GM12878 (cell line): ENCODE measurements at regions of chr3 and their contacts with region 1.

Region 1: GRCh38 chr3:149752051-149752787 is at the start of gene COMMD2:
- DNase-seq: peak; percentile 84
- ATAC-seq: peak; percentile 100
- H3K4me3 ChIP-seq: peak within 1 kb of the TSS; percentile 85
- H3K27ac ChIP-seq: peak within 1 kb of the TSS; percentile 54
- H3K4me1 ChIP-seq: no peaks in the 10 kb centered on the region
- H3K27me3 ChIP-seq: no peaks in the 10 kb centered on the region
- CTCF ChIP-seq: peak; percentile 21 to 47 (median 46); a peak in 5 of 6 replicates
- EP300 ChIP-seq: no peak
- POLR2A ChIP-seq: peak; percentile 95
- RAD21 ChIP-seq: peak; percentile 40
- polyA plus RNA-seq, gene COMMD2: 59.4 to 97.0 TPM

Region 2: DNA sequence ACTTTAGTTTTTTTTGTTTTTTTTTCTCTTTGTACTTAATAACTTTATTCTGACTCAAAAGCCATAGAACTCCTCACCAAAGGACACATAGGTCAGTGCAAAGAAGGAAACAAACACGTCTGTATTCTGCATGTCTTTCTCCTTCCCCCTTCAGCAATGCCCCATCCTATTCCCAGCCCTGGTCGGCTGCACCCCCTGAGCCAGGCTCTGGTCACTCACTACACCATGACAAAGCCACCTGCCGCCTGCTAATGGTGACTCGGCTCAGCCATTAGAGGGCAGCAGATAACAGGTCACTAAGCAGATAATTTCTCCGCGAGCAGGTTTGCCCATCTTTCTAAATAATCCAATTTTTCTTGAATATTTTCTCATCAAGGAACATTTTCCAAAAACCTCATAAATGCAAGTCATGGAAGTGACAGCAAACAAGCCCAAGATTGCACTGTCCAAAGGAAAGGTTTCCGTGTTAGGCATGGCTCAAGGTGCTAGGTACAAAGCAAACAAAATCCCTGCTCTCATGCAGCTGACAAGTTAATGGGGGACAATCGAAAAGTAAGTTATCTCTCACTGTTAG is 239.9 kb before region 1 on chr3:
- CTCF ChIA-PET with region 1: interaction called, 21 read pairs
- POLR2A ChIA-PET with region 1: no interaction called
- RAD21 ChIA-PET with region 1: interaction called, 4 read pairs
- SMC1A ChIA-PET with region 1: interaction called, 7 read pairs
- in situ Hi-C with region 1: no loop called
- intact Hi-C with region 1: loop called (anchors 1 kb)
- DNase-seq: no peak
- ATAC-seq: peak; percentile 92
- H3K4me3 ChIP-seq: no peak overlapping the region
- H3K27ac ChIP-seq: no peak overlapping the region
- H3K4me1 ChIP-seq: no peaks in the 10 kb centered on the region; the same call in 1 of the 2 replicates
- H3K27me3 ChIP-seq: no peaks in the 10 kb centered on the region
- CTCF ChIP-seq: peak; percentile 81 to 85 (median 84); a peak in 5 of 6 replicates
- EP300 ChIP-seq: no peak
- POLR2A ChIP-seq: no peak
- RAD21 ChIP-seq: peak; percentile 93

Region 3: GRCh38 chr3:149575961-149576564 is 176.2 kb before region 1 on chr3:
- CTCF ChIA-PET with region 1: interaction called, 35 read pairs
- POLR2A ChIA-PET with region 1: interaction called, 3 read pairs
- RAD21 ChIA-PET with region 1: interaction called, 6 read pairs
- SMC1A ChIA-PET with region 1: interaction called, 21 read pairs
- in situ Hi-C with region 1: no loop called
- intact Hi-C with region 1: no loop called
- DNase-seq: no peak
- ATAC-seq: peak; percentile 51
- H3K4me3 ChIP-seq: peak overlapping the region; percentile 10; the same call in 1 of the 2 replicates
- H3K27ac ChIP-seq: peak overlapping the region; percentile 70
- H3K4me1 ChIP-seq: peaks cover 59% of the 10 kb centered on the region
- H3K27me3 ChIP-seq: no peaks in the 10 kb centered on the region
- CTCF ChIP-seq: no peak
- EP300 ChIP-seq: 0 out of 4 replicates have a peak, but pooled peaks of 1 of the 2 experiments have one; percentile 35
- POLR2A ChIP-seq: no peak
- RAD21 ChIP-seq: no peak

Region 4: GRCh38 chr3:149765762-149766334 is 13.6 kb after region 1 on chr3:
- CTCF ChIA-PET with region 1: interaction called, 24 read pairs
- POLR2A ChIA-PET with region 1: no interaction called
- RAD21 ChIA-PET with region 1: interaction called, 8 read pairs
- SMC1A ChIA-PET with region 1: interaction called, 17 read pairs
- in situ Hi-C with region 1: no loop called
- intact Hi-C with region 1: no loop called
- DNase-seq: no peak
- ATAC-seq: peak; percentile 50; the same call in 2 of the 3 replicates
- H3K4me3 ChIP-seq: no peak overlapping the region
- H3K27ac ChIP-seq: no peak overlapping the region
- H3K4me1 ChIP-seq: no peaks in the 10 kb centered on the region
- H3K27me3 ChIP-seq: peaks cover 0 to 7% of the 10 kb centered on the region in 2 experiments; a peak in 1 of 4 replicates
- CTCF ChIP-seq: peak; percentile 39 to 52 (median 47); a peak in 5 of 6 replicates
- EP300 ChIP-seq: no peak
- POLR2A ChIP-seq: no peak
- RAD21 ChIP-seq: peak; percentile 40; the same call in 1 of the 2 replicates